ENCODE measurements at regions of chr16 and their contacts with region 1.

Region 1: GRCh38 chr16:10964039-10964890 is 19.9 kb downstream of the CLEC16A start:
- DNase-seq: peak; percentile 83 to 87
- ATAC-seq: peak; percentile 81 to 91 (median 86)
- H3K4me3 ChIP-seq: no peak overlapping the region
- H3K27ac ChIP-seq: peak overlapping the region in 3 of 10 donors; percentile 30 to 47 (median 46)
- H3K4me1 ChIP-seq: peaks cover 4 to 39% (median 14%) of the 10 kb centered on the region in 9 donors
- H3K27me3 ChIP-seq: no peaks in the 10 kb centered on the region
- CTCF ChIP-seq: peak; percentile 78 to 98 (median 96)

Region 2: DNA sequence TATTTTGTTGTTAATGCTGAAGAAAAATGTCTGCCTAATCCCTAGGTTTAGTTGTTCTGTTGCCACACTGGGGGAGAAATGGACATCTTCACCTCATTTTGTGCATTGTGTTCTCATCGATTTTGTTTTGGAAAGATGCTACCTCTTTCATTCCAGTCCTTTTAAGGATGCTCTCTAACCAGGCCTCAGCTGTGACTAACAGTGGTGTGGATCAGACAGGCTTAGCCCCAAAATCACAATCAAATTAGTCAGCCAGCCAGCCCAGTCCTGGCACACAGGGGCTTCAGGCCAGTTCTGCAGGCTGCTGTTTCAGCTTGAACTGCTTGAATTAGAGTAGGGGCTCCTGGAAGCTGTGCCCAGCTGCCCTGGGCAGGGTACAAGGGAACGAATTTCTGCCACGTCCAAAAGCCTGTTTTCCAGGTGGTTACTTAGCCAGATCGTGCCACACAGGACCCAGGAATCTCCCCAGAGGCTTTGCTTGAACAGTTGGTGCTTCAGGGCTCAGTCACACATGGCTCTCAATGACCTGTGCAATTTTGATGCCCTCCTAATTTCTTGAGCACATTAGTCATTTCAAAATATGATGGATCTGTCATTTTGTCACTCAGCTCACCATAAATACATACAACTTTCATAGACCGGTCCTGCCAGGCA is 40.8 kb after region 1 on chr16:
- intact Hi-C with region 1: no loop called
- DNase-seq: no peak
- ATAC-seq: no peak
- H3K4me3 ChIP-seq: no peak overlapping the region
- H3K27ac ChIP-seq: no peak overlapping the region
- H3K4me1 ChIP-seq: peaks cover 0 to 5% (median 0%) of the 10 kb centered on the region in 9 donors
- H3K27me3 ChIP-seq: no peaks in the 10 kb centered on the region
- CTCF ChIP-seq: no peak

Region 3: DNA sequence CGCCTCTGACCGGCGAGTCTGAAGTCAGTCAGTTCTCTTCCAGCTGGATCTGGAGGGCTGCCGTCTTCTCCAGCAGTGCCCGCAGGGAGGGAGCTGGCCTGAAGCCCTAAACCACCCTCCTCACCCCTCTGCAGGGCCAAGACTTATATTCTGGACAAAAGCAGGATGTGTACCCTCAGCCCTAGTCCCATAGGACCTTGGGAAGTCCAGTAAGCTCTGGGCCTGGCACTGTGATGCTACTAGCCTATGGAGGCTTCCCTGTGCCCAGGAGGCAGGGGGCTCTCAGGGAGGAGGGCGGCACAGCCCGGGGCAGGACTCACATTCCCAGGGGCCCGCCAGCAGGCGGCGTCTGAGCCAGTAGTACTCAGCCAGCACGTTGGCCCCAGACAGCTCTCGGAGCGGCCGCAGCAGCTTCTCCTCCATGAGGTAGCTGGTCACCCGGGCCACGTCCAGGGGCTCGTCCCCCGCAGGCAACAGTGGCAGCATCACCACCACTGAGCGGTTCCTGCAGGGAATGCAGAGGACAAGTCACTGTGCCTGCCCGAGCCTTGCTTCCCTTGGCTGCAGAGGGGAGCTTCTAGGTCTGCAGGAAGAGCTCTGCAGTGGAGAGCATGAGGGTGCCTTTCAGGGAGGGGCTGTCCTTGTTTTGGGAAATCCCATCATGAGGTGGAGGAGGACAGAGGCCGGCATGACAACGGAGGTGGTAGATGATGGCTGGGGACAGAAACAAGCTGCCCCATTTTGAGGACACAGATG is 422.7 kb after region 1 on chr16:
- intact Hi-C with region 1: loop called in 1 of 10 experiments (anchors 10 kb)
- DNase-seq: peak in 1 of 2 donors; percentile 49
- ATAC-seq: peak in 7 of 8 donors; percentile 23 to 76 (median 57)
- H3K4me3 ChIP-seq: no peak overlapping the region
- H3K27ac ChIP-seq: no peak overlapping the region
- H3K4me1 ChIP-seq: peaks cover 0 to 7% (median 0%) of the 10 kb centered on the region in 9 donors
- H3K27me3 ChIP-seq: peaks cover 0 to 14% (median 0%) of the 10 kb centered on the region in 7 donors
- CTCF ChIP-seq: peak in 8 of 9 donors; percentile 22 to 58 (median 46)

Region 4: DNA sequence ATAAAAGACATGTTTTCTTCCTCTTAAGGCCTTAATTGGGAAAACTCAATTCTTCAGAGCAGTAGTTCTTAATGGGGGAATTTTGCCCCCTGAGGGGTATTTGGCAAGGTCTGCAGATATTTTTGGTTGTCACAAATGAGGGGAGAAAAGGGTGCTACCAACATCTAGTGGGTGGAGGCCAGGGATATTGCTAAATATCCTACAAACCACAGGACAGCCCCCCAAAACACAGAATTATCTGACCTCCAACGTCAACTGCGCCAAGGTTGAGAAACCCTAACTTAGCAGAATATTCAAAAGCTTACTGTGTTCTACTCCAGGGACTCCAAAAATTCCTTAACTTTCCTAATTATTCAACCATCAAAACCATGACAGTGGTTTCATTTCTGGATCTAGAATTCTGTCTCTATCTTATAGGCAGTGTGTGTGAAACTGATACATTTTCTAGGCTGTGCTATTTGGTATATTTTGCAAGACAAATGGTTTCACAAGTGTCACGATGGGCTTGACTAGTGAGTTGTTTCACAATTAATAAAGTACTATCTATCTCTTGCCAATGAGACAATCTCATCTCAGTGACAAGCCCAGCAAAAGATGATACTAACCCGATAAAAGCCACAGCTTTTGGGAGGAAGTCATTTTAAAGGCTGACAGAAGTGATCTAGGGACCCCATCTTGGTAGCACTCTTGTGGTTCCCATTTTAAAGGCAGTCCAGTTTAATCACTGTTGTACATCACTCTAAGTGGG is 763.7 kb after region 1 on chr16:
- intact Hi-C with region 1: loop called in 1 of 10 experiments (anchors 10 kb)
- DNase-seq: no peak
- ATAC-seq: peak in 2 of 8 donors; percentile 9 to 33
- H3K4me3 ChIP-seq: no peak overlapping the region
- H3K27ac ChIP-seq: no peak overlapping the region
- H3K4me1 ChIP-seq: peaks cover 0 to 40% (median 16%) of the 10 kb centered on the region in 9 donors
- H3K27me3 ChIP-seq: no peaks in the 10 kb centered on the region
- CTCF ChIP-seq: no peak

Measured in heart right ventricle (tissue), 16 donors.